Left cardiac atrium (tissue), 4 donors: ENCODE measurements at regions of chr11 and their contacts with region 1.

Region 1: GRCh38 chr11:64148200-64148916 is 17.6 kb downstream of the MACROD1 start:
- DNase-seq: peak; percentile 81
- ATAC-seq: peak; percentile 74 to 78

Region 2: DNA sequence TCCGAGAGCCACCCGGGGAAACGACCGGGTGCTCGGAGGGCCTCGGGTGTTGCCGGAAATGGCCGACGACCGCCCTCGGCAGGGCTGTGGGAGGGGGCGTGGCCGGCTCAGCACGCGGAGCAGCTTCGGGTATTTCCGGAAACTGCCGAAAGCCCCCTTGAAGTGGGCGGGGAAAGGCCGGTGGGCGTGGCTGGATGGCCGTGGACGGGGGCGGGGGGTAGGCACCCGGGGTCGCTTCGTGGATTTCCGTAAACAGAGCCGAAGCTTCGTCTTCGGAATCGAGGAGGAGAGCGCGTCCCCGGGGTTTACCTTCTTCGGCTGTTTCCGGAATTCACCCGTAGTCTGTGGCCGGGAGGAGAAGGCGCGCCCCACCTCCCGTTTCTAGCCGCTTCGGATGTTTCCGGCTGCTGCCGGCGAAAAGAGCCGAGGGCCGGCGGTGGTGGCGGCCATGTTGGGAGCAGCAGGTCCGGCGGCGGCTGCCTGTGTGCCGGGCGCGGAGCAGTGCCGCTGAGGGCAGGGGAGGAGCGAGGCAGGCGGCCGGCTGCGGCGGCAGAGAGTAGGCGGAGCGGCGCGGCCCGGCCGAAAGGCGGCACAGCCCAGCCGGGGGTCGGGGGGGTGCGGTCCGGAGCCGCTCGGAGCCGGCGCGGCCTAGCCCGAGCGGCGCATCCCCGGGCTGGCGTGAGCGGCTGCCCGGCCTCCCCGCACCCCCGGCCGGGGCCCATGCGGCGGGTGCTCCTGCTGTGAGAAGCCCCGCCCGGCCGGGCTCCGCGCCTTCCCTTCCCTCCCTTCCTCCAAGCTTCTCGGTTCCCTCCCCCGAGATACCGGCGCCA is 309.5 kb before region 1 on chr11 and contains the start of gene MARK2:
- intact Hi-C with region 1: loop called in 1 of 2 experiments (anchors 2 kb)
- DNase-seq: peak; percentile 98
- ATAC-seq: peak; percentile 88 to 91
- total RNA-seq, gene MARK2: 33.5 to 37.5 TPM

Region 3: DNA sequence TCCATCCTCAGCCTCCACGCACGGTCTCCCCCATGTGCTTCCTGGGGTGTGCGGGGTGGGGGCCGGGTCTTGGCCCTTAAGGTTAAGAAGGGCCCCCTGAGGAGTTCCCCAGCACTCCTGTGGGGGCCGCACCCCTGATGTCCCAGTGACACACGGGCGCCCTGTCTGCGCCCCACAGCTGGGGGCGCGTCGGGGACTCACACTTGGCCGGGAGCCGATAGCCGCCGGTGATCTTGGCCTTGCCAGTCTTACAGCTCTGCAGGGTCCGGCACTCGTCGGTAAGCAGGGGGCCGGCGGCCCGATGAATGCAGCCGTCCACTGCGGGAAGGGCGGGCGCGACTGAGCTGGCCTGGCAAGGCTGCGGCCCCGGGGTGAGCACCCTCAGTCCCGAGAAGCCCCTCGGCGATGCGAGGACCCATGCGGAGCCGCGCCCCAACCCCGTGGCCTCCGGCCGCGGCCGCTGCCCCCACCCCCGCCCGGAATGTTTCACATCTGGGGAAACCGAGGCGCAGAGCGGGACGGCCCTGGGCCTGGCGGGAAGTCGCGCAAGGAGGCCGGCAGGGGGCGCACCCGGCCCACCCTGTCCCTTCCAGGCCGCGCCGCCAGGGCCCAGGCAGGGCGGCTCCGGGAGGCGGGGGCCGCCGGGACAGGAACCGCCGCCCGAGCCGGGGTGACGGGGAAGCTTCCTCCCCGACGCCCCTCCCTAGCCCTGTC is 148.2 kb before region 1 on chr11:
- intact Hi-C with region 1: loop called (anchors 2 kb)
- DNase-seq: peak; percentile 79
- ATAC-seq: peak; percentile 86 to 93

Region 4: GRCh38 chr11:64036087-64037026 is 112.0 kb before region 1 on chr11:
- intact Hi-C with region 1: loop called in 1 of 2 experiments (anchors 5 kb)
- DNase-seq: peak; percentile 65
- ATAC-seq: peak; percentile 72 to 82